Right ventricle myocardium inferior (tissue), 1 donor: ENCODE measurements at regions of chr13 and their contacts with region 1.

Region 1: GRCh38 chr13:26253787-26254582 is at the start of gene CDK8:
- DNase-seq: peak; percentile 95
- ATAC-seq: peak; percentile 96
- total RNA-seq, gene CDK8: 10.3 TPM

Region 2: GRCh38 chr13:26221721-26222519 is 32.1 kb before region 1 on chr13 and contains the start of gene RNF6:
- intact Hi-C with region 1: loop called (anchors 2 kb)
- DNase-seq: peak; percentile 97
- ATAC-seq: peak; percentile 98
- total RNA-seq, gene RNF6: 19.7 TPM

Region 3: GRCh38 chr13:26325876-26326275 is 71.9 kb after region 1 on chr13:
- intact Hi-C with region 1: loop called (anchors 10 kb)
- DNase-seq: no peak
- ATAC-seq: no peak